GM18951 (cell line): ENCODE measurements at regions of chr6 and their contacts with region 1.

Region 1: DNA sequence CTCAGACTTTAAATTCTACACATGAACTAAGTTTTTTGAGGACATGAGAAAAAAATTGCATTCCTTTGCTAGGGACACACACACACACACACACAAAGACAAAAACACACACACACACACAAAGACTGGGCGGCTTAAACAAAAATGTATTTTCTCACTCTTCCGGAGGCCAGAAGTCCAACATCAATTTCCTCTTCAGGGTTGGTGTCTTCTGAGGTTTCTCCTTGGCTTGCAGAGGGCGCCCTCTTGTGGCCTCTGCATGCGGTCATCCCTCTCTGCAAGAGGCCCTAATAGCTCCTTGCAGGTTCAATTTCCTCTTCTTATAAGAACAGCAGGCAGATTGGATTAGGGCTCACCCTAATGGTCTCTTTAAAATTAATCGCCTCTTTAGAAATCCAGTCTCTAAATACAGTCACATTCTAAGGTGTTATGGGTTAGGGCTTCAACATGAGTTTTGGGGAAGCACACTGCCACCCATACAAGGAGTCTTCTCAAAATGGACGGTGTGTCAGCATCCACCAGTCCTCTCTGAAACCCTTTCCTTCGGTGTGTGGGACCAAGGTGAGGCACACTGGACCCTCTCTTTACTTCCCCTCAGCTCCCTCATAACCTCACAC is 61.4 kb downstream of the GPR6 start:
- POLR2A ChIP-seq: no peak

Region 2: DNA sequence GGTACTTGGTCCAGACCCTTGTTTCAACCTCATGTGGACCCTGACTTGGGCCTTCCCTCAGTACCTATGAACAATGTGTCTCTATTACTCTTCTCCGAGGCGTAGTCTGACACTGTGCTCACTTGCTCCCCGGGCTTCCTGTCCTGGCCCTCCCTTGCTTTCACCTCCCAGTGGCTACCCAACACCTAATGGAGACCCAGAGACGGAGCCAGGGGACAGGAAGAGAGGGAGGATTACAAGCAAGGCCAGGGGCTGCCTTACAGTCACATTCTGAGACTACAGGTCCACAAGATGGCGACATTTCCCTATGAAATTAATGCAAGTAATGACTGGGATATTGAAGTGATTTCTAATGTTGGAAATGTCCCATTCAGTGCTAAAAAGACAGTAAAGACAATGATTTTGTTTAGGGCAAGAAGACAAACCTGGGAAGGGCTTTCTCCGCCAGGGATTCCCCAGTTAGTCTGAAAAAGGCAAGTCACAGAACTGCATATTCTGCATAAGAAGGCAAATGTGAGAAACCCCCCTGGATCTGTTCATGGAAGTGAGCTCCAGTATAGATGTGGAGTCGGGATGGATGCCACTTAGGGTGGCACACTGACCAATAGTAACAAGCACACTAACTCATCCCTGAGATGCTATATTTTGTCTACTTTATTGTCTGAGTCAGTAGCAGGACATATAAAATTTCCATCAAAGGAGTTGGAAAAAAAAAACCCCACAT is 512.4 kb before region 1 on chr6:
- in situ Hi-C with region 1: loop called (anchors 10 kb)
- POLR2A ChIP-seq: no peak

Region 3: GRCh38 chr6:109713097-109713496 is 326.4 kb before region 1 on chr6:
- in situ Hi-C with region 1: loop called (anchors 10 kb)
- POLR2A ChIP-seq: no peak

Region 4: GRCh38 chr6:110201151-110201884 is 161.8 kb after region 1 on chr6:
- in situ Hi-C with region 1: no loop called
- POLR2A ChIP-seq: no peak